Stomach (tissue), 19 donors: ENCODE measurements at regions of chr9 and their contacts with region 1.

Region 1: GRCh38 chr9:81609782-81610739 is 79.3 kb downstream of the TLE1 start:
- DNase-seq: peak in 1 of 2 donors; percentile 56
- H3K4me3 ChIP-seq: no peak overlapping the region
- H3K27ac ChIP-seq: peak overlapping the region in 1 of 5 donors; percentile 30
- H3K4me1 ChIP-seq: peaks cover 0 to 31% (median 15%) of the 10 kb centered on the region in 4 donors
- H3K27me3 ChIP-seq: no peaks in the 10 kb centered on the region
- CTCF ChIP-seq: no peak
- EP300 ChIP-seq: no peak
- POLR2A ChIP-seq: no peak

Region 2: GRCh38 chr9:81671880-81672280 is 61.8 kb after region 1 on chr9:
- intact Hi-C with region 1: loop called (anchors 10 kb)
- DNase-seq: peak; percentile 78 to 94
- H3K4me3 ChIP-seq: no peak overlapping the region
- H3K27ac ChIP-seq: peak overlapping the region; percentile 34 to 76 (median 50)
- H3K4me1 ChIP-seq: peaks cover 21 to 91% (median 46%) of the 10 kb centered on the region in 4 donors
- H3K27me3 ChIP-seq: no peaks in the 10 kb centered on the region
- CTCF ChIP-seq: no peak
- EP300 ChIP-seq: no peak
- POLR2A ChIP-seq: no peak